Aorta (tissue), 5 donors: ENCODE measurements at regions of chr12 and their contacts with region 1.

Region 1: GRCh38 chr12:108722992-108723766 is 8.1 kb downstream of the CORO1C start:
- DNase-seq: no peak
- ATAC-seq: no peak
- H3K4me3 ChIP-seq: no peak overlapping the region
- H3K27ac ChIP-seq: peak overlapping the region in 1 of 2 donors; percentile 57
- H3K4me1 ChIP-seq: peaks cover 4 to 8% of the 10 kb centered on the region in 2 donors
- H3K27me3 ChIP-seq: no peaks in the 10 kb centered on the region

Region 2: DNA sequence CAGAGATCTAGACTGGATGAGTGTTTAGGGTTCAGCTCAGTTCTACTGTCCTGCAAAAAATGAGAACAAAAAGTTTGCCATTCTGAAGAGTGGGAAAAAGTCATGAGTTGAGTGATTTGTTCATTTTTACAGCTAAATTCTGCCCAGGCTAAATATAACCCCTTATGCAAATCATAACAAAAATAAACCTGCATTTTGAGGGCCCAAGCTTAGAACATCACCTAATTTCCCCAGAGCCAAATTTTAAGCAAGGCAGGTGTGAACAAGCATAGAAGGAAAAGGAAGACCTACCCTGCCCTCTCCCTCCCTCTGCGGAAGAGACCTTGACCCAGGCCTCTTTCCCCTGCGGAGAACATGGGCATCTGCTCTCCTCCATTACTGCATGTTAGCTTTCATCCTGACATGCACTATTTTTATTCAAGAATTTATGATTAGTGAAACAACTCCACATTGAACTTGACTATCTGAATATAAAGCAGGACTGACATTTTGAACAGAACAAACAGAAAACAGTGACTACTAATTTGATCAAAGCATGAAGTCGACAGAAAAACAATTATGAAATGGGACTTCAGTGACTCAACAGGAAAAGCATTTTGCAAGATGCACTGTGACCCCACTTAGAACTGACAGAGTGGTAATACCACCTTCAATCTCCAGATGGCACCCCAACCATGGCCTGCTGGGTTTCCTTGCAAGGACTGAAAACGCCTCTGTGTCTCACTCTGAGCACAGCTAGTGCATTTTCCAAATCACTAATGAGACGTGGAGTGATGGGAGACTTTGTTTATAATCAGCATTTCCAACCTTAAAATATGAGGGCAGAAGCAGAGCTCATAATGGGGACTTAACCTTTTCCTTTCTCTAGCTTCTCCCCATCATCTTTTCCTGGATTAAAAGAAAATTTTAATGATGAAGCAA is 58.6 kb before region 1 on chr12:
- intact Hi-C with region 1: loop called in 1 of 2 experiments (anchors 5 kb)
- DNase-seq: peak; percentile 83 to 88
- ATAC-seq: peak; percentile 98
- H3K4me3 ChIP-seq: no peak overlapping the region
- H3K27ac ChIP-seq: peak overlapping the region; percentile 82 to 97
- H3K4me1 ChIP-seq: peaks cover 0 to 8% of the 10 kb centered on the region in 2 donors
- H3K27me3 ChIP-seq: no peaks in the 10 kb centered on the region

Region 3: DNA sequence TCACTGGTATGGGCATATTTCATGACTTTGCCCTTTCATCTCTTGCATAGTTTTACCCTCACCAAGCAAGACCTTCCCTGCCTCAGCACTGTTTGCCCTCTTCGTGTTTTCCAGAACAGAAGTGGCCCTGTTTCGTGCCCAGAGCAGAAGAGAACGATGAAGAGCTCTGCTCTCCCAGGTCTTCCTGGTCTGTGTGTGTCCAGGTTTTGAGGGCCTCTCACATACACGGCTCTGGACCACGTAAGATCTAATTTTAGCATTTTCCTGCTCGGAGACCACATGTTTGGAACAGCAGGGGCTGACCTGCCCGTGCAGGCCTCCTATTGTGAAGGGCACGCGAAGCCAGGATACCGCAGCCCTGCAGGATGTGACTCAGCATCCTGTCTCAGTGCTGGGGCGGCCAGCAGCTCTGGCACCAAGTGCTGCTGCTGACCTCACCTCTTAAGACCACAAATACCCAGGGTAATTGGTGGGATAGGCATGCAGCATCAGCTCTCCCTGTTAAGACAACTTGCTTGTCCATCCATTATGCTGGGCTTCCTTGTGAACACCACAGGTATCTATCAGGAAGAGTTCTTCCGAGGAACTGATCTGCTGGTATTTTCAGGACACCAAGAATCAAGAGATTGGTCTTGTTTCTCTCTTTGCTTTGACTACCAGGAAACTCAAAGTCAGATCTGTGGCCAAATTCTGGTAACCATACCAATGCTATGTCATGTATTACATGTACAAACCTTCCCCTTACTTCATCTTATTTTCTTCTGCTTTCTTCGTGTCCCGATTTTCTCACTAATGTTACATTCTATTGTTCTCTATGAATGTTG is 115.2 kb after region 1 on chr12:
- intact Hi-C with region 1: loop called in 1 of 2 experiments (anchors 10 kb)
- DNase-seq: peak; percentile 96
- ATAC-seq: peak; percentile 93
- H3K4me3 ChIP-seq: no peak overlapping the region
- H3K27ac ChIP-seq: peak overlapping the region; percentile 96 to 100
- H3K4me1 ChIP-seq: peaks cover 0 to 9% of the 10 kb centered on the region in 2 donors
- H3K27me3 ChIP-seq: no peaks in the 10 kb centered on the region